Activated CD8-positive, alpha-beta T cell treated with anti-CD3 and anti-CD28 coated beads, Interleukin-2, amount 10 ng/mL, durations not matched to agents 7 days and 5 days (primary cell): ENCODE measurements at regions of chr17 and their contacts with region 1.

Region 1: GRCh38 chr17:32006957-32007462 is at the start of gene LRRC37B:
- DNase-seq: peak; percentile 90
- ATAC-seq: peak; percentile 94
- H3K4me3 Mint-ChIP-seq: peak within 1 kb of the TSS; percentile 87
- H3K27ac Mint-ChIP-seq: peak within 1 kb of the TSS; percentile 88
- H3K4me1 Mint-ChIP-seq: peaks cover 28% of the 10 kb centered on the region
- H3K27me3 Mint-ChIP-seq: no peaks in the 10 kb centered on the region
- total RNA-seq, gene LRRC37B: 32.9 to 37.4 TPM

Region 2: DNA sequence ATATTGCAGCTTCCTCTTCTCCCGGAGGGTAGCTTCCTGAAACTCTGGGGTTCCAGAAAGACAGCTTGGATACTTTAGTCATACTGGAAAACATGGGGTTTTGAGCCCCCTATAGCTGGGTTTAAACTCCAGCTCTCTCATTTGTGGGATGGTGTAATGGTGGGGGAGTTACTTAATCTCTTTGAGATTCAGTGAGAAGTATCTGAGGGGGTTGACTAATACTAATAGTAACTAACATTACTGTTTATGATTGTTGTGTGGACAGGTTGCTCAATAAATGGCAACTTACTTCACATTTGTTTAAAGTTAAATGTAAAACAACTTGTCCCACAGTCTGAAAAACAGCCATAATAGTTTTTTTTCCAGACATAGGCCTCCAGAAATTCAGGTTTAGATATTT is 75.3 kb before region 1 on chr17:
- CTCF ChIA-PET with region 1: no interaction called
- POLR2A ChIA-PET with region 1: interaction called, 11 read pairs
- DNase-seq: no peak
- ATAC-seq: no peak
- H3K4me3 Mint-ChIP-seq: no peak overlapping the region
- H3K27ac Mint-ChIP-seq: no peak overlapping the region
- H3K4me1 Mint-ChIP-seq: peaks cover 6% of the 10 kb centered on the region
- H3K27me3 Mint-ChIP-seq: no peaks in the 10 kb centered on the region

Region 3: DNA sequence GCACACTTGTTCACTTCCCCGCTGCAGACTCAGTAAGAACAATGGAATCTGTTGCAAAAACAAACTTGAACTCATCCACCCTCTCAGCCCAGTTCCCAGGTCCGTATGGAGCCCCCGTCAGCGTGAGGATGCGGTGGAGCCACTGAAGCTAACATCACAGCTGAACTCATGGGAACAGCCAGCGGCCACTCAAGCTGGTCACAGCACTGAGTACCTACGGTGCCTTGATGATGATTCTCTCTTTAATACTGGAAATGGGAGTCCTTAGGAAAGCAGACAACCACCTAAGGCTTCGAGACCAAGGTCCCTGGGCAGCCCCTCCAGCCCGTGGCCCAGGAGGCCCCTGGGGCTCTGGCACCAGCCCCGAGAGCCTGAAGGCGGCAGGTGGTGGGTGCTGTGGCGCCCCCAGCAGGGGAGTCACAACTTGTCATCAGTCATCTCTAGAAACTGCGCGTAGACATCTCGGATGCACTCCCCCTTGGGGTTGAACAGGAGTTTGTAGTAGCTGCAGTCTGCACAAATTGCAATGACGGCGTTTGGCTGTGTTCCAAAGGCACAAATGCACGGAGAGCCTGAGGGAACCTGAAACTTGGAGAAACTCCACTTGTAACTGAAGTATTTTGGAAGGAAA is 104.2 kb after region 1 on chr17:
- CTCF ChIA-PET with region 1: interaction called, 11 read pairs
- POLR2A ChIA-PET with region 1: interaction called, 5 read pairs
- DNase-seq: peak; percentile 62
- ATAC-seq: peak; percentile 65
- H3K4me3 Mint-ChIP-seq: no peak overlapping the region
- H3K27ac Mint-ChIP-seq: no peak overlapping the region
- H3K4me1 Mint-ChIP-seq: peaks cover 32% of the 10 kb centered on the region
- H3K27me3 Mint-ChIP-seq: peaks cover 2% of the 10 kb centered on the region

Region 4: DNA sequence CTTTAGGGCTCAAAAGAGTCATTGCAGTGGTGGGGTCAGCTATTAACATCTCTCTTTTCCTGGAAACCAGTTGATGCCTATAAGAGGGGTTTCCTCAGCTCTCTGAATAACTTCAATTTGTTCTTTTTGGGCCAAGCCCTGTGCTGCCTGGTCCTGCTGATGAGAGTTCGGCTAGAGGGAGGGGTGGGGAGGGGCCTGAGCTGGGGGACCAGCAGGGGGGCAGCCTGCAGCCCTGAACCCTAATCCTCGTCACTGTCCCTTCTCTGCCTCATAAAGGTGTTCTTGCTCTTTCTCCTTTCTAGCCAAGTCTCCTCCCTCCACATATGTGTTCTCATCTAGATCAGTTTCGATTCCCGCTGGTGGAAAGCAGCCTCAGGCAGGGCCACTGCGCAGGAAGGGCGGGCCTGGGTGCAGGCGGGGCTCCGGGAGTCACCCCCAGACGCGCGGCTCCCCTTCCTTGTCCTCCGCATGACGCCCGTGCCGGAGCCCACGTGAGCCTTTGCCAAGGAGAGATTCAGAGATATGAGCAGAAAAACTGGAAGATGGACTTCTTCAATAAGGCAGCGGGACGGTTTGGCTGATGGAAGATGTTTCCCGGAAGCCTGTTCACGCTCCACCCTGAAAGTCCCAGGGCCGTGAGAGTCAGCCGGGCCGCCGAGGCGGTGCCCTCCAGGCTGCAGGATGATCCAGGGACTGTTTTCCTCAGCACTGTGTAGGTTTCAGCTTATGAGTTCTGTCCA is 120.3 kb after region 1 on chr17:
- CTCF ChIA-PET with region 1: interaction called, 6 read pairs
- POLR2A ChIA-PET with region 1: interaction called, 10 read pairs
- DNase-seq: peak; percentile 93
- ATAC-seq: peak; percentile 100
- H3K4me3 Mint-ChIP-seq: peak overlapping the region; percentile 88
- H3K27ac Mint-ChIP-seq: peak overlapping the region; percentile 93
- H3K4me1 Mint-ChIP-seq: peaks cover 33% of the 10 kb centered on the region
- H3K27me3 Mint-ChIP-seq: no peaks in the 10 kb centered on the region